Activated CD4-positive, alpha-beta memory T cell treated with anti-CD3 and anti-CD28 coated beads, Interleukin-2, amount 10 ng/mL, durations not matched to agents 7 days and 5 days (primary cell): ENCODE measurements at regions of chr17 and their contacts with region 1.

Region 1: DNA sequence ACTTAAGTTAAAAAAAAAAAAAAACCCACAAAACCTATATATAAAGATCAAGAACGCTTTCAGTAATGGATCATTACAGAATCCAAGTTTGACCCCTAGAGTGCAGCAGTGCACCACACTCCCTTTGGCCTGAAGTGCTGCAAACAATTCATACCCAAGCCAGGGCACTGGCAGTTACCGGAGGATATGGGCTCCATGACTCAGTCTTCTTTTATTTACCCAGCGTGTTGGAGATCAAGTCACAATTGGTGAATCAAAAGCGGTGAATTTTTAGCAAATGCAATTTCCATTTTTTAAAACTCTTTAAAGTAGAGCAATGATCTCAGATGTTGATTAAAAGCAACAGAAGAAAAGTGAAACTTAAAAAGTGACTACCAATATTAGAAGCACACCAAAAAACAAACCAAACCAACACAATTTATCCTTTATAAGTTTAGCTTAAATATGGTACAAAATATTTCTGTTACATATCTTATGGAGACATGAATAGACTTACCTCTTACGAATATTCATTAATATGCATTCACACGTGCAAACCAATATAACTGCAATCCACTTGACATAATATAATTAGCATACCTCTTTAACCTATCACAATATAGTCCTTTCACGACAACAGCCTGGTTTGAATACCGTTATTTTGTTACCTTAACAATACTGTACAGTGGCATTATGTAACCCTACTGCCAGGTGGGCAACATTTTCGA is 46.3 kb downstream of the ZNF652 start:
- DNase-seq: peak; percentile 84
- H3K4me3 Mint-ChIP-seq: peak overlapping the region; percentile 41
- H3K27ac Mint-ChIP-seq: peak overlapping the region; percentile 79
- H3K4me1 Mint-ChIP-seq: peaks cover 33% of the 10 kb centered on the region
- H3K27me3 Mint-ChIP-seq: no peaks in the 10 kb centered on the region

Region 2: GRCh38 chr17:49399995-49400394 is 84.3 kb after region 1 on chr17:
- CTCF ChIA-PET with region 1: interaction called, 32 read pairs
- POLR2A ChIA-PET with region 1: interaction called, 3 read pairs
- DNase-seq: no peak
- H3K4me3 Mint-ChIP-seq: no peak overlapping the region
- H3K27ac Mint-ChIP-seq: no peak overlapping the region
- H3K4me1 Mint-ChIP-seq: peaks cover 14% of the 10 kb centered on the region
- H3K27me3 Mint-ChIP-seq: no peaks in the 10 kb centered on the region

Region 3: GRCh38 chr17:49407981-49408501 is 92.3 kb after region 1 on chr17:
- CTCF ChIA-PET with region 1: interaction called, 11 read pairs
- POLR2A ChIA-PET with region 1: no interaction called
- DNase-seq: peak; percentile 87
- H3K4me3 Mint-ChIP-seq: no peak overlapping the region
- H3K27ac Mint-ChIP-seq: peak overlapping the region; percentile 35
- H3K4me1 Mint-ChIP-seq: peaks cover 34% of the 10 kb centered on the region
- H3K27me3 Mint-ChIP-seq: no peaks in the 10 kb centered on the region